Naive thymus-derived CD4-positive, alpha-beta T cell (primary cell): ENCODE measurements at regions of chr11 and their contacts with region 1.

Region 1: GRCh38 chr11:92569717-92570116 is 345.1 kb downstream of the FAT3 start:
- DNase-seq: no peak
- ATAC-seq: no peak
- H3K4me3 ChIP-seq: no peak overlapping the region
- H3K4me3 Mint-ChIP-seq: no peak overlapping the region
- H3K27ac ChIP-seq: no peak overlapping the region
- H3K27ac Mint-ChIP-seq: no peak overlapping the region
- H3K4me1 ChIP-seq: no peaks in the 10 kb centered on the region
- H3K4me1 Mint-ChIP-seq: no peaks in the 10 kb centered on the region
- H3K27me3 ChIP-seq: no peaks in the 10 kb centered on the region
- H3K27me3 Mint-ChIP-seq: no peaks in the 10 kb centered on the region

Region 2: DNA sequence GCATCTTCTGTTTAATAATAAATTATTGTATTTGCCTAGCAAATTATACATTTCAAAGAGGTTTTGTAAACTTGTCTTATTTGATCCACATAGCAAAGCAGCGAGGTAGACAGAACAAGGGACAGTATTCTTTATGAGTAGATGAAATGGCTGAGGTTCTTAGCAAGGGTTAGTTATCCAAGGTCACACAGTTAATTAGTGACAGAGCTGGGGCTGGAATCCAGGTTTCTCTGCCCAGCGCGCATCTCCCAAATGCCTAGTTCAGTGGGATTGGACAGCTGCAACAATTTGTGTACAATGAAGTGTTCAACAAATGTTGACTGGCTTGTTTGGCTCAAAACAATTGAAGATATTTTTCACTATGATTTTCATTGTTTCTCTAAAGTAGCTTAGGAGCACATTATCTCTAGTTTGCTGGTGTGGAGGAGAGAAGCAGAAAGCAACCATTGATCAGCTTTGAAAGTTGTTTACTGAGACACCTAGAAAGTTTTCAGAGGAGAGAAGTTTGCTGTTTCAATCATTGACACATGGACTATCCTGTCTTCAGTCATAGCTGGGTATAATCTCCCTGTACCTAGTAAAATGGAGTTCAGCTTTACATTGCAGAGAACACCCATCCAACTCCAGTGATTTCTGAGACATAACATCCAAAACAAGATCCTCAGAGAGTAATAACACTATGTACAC is 74.5 kb before region 1 on chr11:
- CTCF ChIA-PET with region 1: no interaction called
- POLR2A ChIA-PET with region 1: no interaction called
- intact Hi-C with region 1: loop called in 1 of 2 experiments (anchors 10 kb)
- DNase-seq: no peak
- ATAC-seq: no peak
- H3K4me3 ChIP-seq: no peak overlapping the region
- H3K4me3 Mint-ChIP-seq: no peak overlapping the region
- H3K27ac ChIP-seq: no peak overlapping the region
- H3K27ac Mint-ChIP-seq: no peak overlapping the region
- H3K4me1 ChIP-seq: no peaks in the 10 kb centered on the region
- H3K4me1 Mint-ChIP-seq: no peaks in the 10 kb centered on the region
- H3K27me3 ChIP-seq: no peaks in the 10 kb centered on the region
- H3K27me3 Mint-ChIP-seq: no peaks in the 10 kb centered on the region